ENCODE measurements at regions of chr2 and their contacts with region 1.

Region 1: DNA sequence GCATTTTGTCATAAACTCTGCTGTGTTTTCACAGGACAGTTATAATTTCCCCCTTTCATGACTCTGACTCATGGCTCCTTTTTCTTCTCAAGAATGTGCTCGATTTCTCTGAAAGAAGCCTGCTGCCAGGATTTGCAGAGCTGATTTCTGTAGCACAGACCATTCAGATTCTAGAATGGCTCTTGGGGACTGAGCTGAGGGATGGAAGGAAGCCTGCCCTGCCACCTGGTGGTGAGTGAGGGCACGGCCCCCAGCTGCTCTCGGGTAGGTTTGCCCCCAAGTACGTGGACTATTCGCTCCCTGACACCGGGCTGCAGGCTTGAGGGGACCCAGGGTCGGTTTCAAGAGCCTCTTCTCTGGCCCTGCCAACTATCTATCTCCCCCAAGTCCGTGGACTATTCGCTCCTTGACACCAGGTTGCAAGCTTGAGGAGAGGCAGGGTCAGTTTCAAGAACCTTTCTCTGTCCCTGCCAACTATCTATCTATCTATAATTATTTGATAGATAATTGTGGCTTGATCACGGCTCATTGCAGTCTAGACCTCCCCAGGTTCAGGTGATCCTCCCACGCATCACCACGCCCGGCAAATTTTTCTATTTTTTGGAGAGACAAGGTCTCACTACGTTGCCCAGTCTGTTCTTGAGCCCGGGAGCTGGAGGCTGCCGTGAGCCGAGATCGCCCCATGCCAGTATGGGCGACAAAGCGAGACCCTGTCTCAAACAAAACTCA is 1.4 kb upstream of the SMYD5 start:
- DNase-seq: peak; percentile 83
- ATAC-seq: peak; percentile 73
- H3K4me3 Mint-ChIP-seq: peak overlapping the region; percentile 14
- H3K27ac Mint-ChIP-seq: no peak overlapping the region
- H3K4me1 Mint-ChIP-seq: peaks cover 28% of the 10 kb centered on the region
- H3K27me3 Mint-ChIP-seq: peaks cover 10% of the 10 kb centered on the region

Region 2: DNA sequence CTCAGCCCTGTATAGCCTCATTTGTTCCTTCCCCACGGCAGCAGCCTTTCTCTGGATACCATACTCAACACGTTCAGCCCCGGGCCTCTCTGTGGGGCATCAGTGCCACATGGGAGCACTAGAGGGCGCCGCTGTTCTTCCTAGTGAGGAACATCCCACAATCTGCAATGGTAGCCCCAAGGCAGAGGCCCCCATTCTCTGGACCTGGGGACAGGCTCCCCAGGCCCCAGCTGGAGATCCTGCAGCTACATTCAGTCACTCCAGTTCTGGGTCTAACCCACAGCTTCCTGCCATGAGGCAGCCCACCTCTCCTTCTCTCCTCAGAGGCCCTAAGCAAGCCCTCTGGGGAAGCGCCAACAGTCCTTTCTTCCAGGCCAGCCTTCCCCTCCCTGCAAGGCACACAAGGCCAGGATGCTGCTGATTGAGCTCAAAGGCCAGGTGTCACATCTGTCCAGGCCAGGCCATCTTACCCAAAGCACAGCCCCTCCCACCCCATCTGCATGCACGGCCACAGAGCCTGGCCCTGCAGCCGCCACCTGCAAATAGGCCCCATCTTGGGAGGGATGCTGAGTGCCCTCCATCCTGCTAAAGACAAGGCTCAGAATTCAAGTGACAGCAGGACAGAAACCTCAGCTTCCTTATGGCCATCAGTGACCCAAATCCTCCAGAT is 126.8 kb before region 1 on chr2:
- CTCF ChIA-PET with region 1: interaction called, 37 read pairs
- POLR2A ChIA-PET with region 1: no interaction called
- DNase-seq: peak; percentile 88
- ATAC-seq: peak; percentile 89
- H3K4me3 Mint-ChIP-seq: no peak overlapping the region
- H3K27ac Mint-ChIP-seq: no peak overlapping the region
- H3K4me1 Mint-ChIP-seq: no peaks in the 10 kb centered on the region
- H3K27me3 Mint-ChIP-seq: no peaks in the 10 kb centered on the region

Region 3: DNA sequence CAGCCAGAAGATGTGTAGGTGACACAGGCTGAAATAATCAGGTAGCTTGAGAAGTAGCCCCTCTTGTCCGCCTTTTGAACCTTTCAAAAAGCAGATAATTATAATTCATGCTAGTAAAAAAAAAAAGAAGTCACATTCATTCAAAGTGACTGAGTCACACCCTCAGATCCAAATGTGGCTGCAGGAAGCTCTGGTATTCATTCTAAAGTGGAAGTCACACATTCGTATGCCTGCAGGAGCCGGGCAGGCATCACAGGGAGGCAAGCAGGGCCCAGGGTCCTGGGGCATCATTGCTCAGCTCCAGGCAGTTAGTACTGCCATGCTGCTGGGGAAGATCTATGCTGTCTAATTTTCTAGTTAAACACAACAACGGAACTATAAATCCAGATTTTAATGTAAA is 78.1 kb before region 1 on chr2:
- CTCF ChIA-PET with region 1: no interaction called
- POLR2A ChIA-PET with region 1: no interaction called
- DNase-seq: no peak
- ATAC-seq: no peak
- H3K4me3 Mint-ChIP-seq: no peak overlapping the region
- H3K27ac Mint-ChIP-seq: no peak overlapping the region
- H3K4me1 Mint-ChIP-seq: no peaks in the 10 kb centered on the region
- H3K27me3 Mint-ChIP-seq: peaks cover 10% of the 10 kb centered on the region

Region 4: GRCh38 chr2:73202156-73203054 is 10.2 kb before region 1 on chr2 and contains the start of gene NOTO:
- CTCF ChIA-PET with region 1: interaction called, 10 read pairs
- POLR2A ChIA-PET with region 1: no interaction called
- DNase-seq: no peak
- ATAC-seq: peak; percentile 66
- H3K4me3 Mint-ChIP-seq: no peak within 1 kb of the TSS
- H3K27ac Mint-ChIP-seq: no peak within 1 kb of the TSS
- H3K4me1 Mint-ChIP-seq: peaks cover 6% of the 10 kb centered on the region
- H3K27me3 Mint-ChIP-seq: peaks cover 44% of the 10 kb centered on the region
- total RNA-seq, gene NOTO: not detected

Region 5: DNA sequence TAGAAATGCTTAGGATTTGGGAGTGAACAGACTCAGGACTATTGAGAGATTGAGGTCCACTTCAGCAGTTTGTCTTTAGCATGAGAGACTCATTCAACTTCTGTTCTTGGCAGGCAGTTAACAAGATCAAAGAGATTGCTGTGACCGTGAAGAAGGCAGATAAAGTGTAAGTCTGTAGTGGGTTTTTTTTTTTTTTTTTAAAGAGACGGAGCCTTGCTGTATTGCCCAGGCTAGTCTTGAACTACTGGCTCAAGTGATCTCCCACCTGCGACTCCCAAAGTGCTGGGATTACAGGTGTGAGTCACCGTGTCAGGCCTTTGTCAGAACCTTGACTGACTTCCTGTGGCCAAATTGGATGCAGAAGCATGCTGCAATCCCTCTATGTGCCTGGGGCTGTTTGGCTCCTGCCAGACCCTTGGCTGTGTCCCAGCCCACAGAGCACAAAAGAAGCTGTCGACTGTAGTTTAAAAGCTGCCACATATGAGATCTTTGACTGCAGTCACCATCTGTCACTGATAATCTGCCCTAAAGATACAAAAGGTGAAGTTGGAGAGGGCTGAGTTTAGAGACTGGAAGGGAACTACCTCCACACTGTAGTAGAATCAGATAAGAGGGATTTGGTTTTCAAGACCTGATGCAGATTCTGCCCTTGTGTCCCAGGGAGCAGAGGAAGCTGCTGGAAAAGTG is 31.4 kb after region 1 on chr2:
- CTCF ChIA-PET with region 1: interaction called, 10 read pairs
- POLR2A ChIA-PET with region 1: interaction called, 3 read pairs
- DNase-seq: no peak
- ATAC-seq: no peak
- H3K4me3 Mint-ChIP-seq: no peak overlapping the region
- H3K27ac Mint-ChIP-seq: peak overlapping the region; percentile 46
- H3K4me1 Mint-ChIP-seq: peaks cover 15% of the 10 kb centered on the region
- H3K27me3 Mint-ChIP-seq: no peaks in the 10 kb centered on the region

Region 6: DNA sequence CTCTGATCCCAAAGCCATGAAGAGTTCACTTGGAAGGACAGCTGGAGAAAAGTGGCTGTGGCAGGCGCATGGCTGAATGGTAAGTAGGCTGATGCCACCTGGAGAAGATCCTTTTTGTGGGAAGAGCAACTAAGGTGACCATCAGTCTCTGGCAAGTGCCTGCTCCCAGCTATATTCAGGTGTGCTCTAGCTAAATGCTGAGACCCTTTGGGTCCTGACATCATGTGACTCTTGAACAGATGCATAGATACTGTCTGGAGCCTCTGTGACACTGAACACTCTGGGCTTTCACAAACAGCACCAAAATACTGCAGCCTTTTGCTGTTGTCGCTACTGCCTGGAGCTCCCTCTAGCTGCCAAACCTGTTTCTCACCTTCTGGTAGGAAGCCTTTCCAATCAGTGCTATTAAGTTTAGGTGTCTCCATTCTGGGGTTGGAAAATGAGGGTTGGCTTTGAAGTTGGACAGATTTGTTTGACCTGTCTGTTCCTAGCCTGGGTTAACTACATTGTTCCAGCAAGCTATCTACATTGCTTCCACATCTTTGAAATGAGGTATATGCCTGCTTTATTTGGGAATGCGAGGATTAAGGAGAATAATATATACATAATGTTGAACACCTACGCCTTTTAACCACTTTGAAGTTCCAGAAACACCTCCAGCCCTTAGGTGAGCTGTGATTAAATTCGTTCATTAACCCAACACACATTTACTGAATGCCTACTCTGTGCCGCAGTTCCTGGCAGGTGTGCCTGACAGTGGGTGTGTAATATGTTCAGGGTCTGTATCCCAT is 77.6 kb after region 1 on chr2:
- CTCF ChIA-PET with region 1: interaction called, 22 read pairs
- POLR2A ChIA-PET with region 1: no interaction called
- DNase-seq: peak; percentile 76
- ATAC-seq: no peak
- H3K4me3 Mint-ChIP-seq: no peak overlapping the region
- H3K27ac Mint-ChIP-seq: no peak overlapping the region
- H3K4me1 Mint-ChIP-seq: peaks cover 29% of the 10 kb centered on the region
- H3K27me3 Mint-ChIP-seq: peaks cover 54% of the 10 kb centered on the region

Region 7: DNA sequence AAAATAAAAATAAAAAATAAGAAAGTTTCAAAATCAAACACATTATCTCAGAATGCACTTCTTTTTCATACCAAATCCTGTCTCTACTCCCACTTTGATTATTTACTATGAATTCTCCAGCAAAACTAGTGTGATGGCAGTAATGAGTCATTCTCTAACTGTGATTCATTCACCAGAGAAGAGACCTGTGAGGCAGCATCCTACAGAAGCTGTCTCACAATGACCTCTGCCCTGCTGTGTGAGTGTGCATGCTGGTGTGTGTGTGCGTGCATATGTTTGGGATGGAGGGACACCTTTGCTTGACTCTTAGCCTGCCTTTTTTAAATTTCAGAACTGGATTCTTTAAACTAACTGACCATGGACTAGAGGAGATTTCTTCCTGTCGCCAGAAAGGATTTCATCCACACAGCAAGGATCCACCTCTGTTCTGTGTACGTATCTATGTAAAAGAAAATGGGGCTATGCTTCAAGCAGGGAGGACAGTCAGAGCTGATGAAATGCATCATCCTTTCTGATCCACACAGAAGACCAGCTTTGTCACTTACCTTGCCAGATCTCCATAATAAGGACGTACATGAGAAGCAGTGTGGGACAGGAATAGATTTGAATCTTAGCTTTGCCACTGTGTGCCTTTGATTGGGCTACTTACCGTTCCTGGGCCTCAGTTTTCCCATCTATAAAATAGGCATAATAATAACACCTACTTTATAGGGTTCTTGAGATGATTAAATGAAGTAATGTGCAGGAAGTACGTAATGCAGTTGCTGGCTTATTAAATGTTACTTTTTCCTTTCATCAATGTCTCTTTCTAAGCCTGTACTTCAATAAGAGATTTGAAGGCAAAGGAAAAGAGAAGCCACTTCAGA is 647.3 kb after region 1 on chr2:
- CTCF ChIA-PET with region 1: no interaction called
- POLR2A ChIA-PET with region 1: no interaction called
- DNase-seq: peak; percentile 26
- ATAC-seq: no peak
- H3K4me3 Mint-ChIP-seq: no peak overlapping the region
- H3K27ac Mint-ChIP-seq: no peak overlapping the region
- H3K4me1 Mint-ChIP-seq: peaks cover 3% of the 10 kb centered on the region
- H3K27me3 Mint-ChIP-seq: no peaks in the 10 kb centered on the region

Measured in activated CD8-positive, alpha-beta T cell treated with anti-CD3 and anti-CD28 coated beads, Interleukin-2, amount 10 ng/mL, durations not matched to agents 7 days and 5 days (primary cell).